Activated CD4-positive, alpha-beta T cell treated with anti-CD3 and anti-CD28 coated beads, Interleukin-2, amount 10 ng/mL, durations not matched to agents 7 days and 5 days (primary cell): ENCODE measurements at regions of chr17 and their contacts with region 1.

Region 1: DNA sequence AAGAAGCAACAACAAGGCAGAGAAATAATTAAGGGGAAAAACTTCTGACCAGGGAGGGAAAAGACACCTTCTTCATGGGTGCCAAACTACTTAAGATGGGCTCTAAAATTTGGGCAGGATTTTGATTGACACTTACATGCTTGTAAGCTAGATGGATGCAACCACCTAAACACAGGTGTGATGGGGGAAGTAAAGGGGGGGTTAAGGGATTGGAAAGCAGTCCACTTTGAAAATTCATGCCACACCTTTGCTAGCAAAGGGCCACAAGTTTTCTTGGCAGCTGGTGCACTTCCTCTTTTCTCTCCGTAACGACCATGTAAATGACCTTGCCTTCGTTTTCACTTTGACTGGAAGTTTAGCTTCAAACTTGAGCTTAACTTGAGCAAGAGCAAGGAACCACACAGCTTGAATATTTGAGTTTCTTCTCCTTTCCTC is 14.3 kb upstream of the PRKAR1A start:
- DNase-seq: no peak
- H3K4me3 Mint-ChIP-seq: no peak overlapping the region
- H3K27ac Mint-ChIP-seq: peak overlapping the region; percentile 72
- H3K4me1 Mint-ChIP-seq: peaks cover 32% of the 10 kb centered on the region
- H3K27me3 Mint-ChIP-seq: peaks cover 6% of the 10 kb centered on the region

Region 2: DNA sequence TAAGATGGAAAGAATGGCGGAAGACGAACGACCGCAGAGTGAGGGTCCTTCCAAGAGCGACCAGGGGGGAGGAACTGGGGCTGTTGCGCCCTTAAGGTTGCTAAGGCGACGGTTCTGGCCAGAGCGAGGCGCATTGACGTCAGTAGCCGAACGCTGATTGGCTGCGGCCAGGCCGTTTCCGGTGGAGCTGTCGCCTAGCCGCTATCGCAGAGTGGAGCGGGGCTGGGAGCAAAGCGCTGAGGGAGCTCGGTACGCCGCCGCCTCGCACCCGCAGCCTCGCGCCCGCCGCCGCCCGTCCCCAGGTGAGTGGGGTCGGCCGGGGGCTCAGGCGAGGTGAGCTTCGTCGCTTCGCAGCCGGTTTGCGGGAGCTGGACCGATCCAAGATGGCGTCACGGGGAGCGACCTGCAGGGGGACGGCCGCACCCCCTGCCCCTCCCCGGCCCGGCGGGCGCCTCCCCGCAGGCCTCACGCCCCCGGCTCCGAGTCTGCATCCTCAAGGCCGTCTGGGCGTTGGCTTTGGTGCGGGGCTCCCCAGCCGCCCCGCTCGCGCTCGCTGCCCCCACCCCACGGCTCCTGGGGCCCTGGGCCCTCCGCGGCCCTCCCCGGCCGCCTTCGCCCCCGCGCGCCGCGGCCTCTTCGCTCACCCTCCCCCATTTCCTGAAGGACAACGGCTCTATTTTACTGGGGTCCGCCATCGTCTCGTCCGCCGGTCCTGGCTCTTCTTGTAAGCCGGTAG is 14.5 kb after region 1 on chr17 and contains the start of gene PRKAR1A:
- CTCF ChIA-PET with region 1: interaction called, 16 read pairs
- POLR2A ChIA-PET with region 1: no interaction called
- DNase-seq: peak; percentile 95
- H3K4me3 Mint-ChIP-seq: peak within 1 kb of the TSS; percentile 92
- H3K27ac Mint-ChIP-seq: peak within 1 kb of the TSS; percentile 96
- H3K4me1 Mint-ChIP-seq: peaks cover 57% of the 10 kb centered on the region
- H3K27me3 Mint-ChIP-seq: no peaks in the 10 kb centered on the region
- total RNA-seq, gene PRKAR1A: 200 to 203 TPM

Region 3: GRCh38 chr17:68527323-68527722 is 29.4 kb after region 1 on chr17:
- CTCF ChIA-PET with region 1: no interaction called
- POLR2A ChIA-PET with region 1: no interaction called
- DNase-seq: no peak
- H3K4me3 Mint-ChIP-seq: no peak overlapping the region
- H3K27ac Mint-ChIP-seq: no peak overlapping the region
- H3K4me1 Mint-ChIP-seq: peaks cover 3% of the 10 kb centered on the region
- H3K27me3 Mint-ChIP-seq: no peaks in the 10 kb centered on the region